ENCODE measurements at regions of chr17 and their contacts with region 1.

Region 1: GRCh38 chr17:75827252-75828115 is 16.7 kb downstream of the UNC13D start:
- DNase-seq: peak; percentile 82
- H3K4me3 ChIP-seq: peak overlapping the region in 2 of 3 experiments; percentile 21 to 30
- H3K27ac ChIP-seq: peak overlapping the region; percentile 22
- H3K4me1 ChIP-seq: peaks cover 7% of the 10 kb centered on the region
- H3K27me3 ChIP-seq: no peaks in the 10 kb centered on the region
- CTCF ChIP-seq: peak; percentile 85 to 91
- POLR2A ChIP-seq: peak; percentile 65

Region 2: GRCh38 chr17:75764711-75765421 is 62.6 kb before region 1 on chr17 and contains the start of gene GALK1:
- CTCF ChIA-PET with region 1: interaction called, 27 read pairs
- POLR2A ChIA-PET with region 1: interaction called, 4 read pairs
- dilution Hi-C with region 1: no loop called
- intact Hi-C with region 1: loop called (anchors 1 kb)
- DNase-seq: peak; percentile 66
- H3K4me3 ChIP-seq: peak within 1 kb of the TSS; percentile 44 to 62 (median 53)
- H3K27ac ChIP-seq: peak within 1 kb of the TSS; percentile 15
- H3K4me1 ChIP-seq: peaks cover 11% of the 10 kb centered on the region
- H3K27me3 ChIP-seq: no peaks in the 10 kb centered on the region
- CTCF ChIP-seq: peak in 1 of 2 donors; percentile 71
- POLR2A ChIP-seq: peak; percentile 34
- total RNA-seq, gene GALK1: 45.8 and 47.0 TPM in 2 replicates

Region 3: DNA sequence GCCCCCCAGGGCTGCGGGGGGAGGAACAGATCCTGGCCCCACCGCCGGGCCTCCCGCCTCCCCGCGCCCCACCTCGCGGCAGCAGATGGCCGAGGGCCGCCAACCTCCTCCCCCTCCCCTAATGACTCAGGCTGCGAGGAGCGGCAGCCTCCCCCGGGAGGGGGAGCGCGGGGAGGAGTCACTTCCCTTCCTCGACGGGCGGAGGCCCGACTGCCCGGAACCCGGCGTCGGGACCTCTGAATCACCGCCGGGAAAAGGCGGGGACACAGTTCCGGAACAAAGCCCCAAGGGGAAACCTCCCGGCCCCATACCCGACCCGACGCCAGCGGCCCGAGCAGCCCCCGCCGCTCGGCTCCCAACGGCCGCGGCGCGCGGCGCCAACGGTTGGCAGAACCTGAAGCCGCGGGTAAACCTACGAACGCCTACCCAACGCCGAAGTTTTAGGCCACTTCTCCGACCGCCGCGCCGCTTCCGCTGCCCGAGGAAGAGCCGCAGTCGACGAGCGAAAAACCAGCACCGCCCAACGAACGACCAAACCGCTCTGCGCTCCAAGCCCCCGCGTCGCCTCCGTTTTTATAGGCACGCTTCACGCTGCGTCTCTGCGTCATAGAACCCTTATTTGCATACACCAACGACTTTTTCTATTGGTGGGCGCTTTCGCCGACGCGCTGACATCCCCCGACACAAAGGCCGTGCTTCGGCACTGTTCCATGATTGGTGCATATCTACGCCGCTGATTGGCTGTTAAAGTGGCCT is 48.1 kb before region 1 on chr17:
- CTCF ChIA-PET with region 1: interaction called, 73 read pairs
- POLR2A ChIA-PET with region 1: interaction called, 11 read pairs
- dilution Hi-C with region 1: no loop called
- intact Hi-C with region 1: loop called (anchors 1 kb)
- DNase-seq: peak; percentile 100
- H3K4me3 ChIP-seq: peak overlapping the region; percentile 61 to 87 (median 72)
- H3K27ac ChIP-seq: peak overlapping the region; percentile 93
- H3K4me1 ChIP-seq: peaks cover 24% of the 10 kb centered on the region
- H3K27me3 ChIP-seq: no peaks in the 10 kb centered on the region
- CTCF ChIP-seq: no peak
- POLR2A ChIP-seq: peak; percentile 100

Region 4: DNA sequence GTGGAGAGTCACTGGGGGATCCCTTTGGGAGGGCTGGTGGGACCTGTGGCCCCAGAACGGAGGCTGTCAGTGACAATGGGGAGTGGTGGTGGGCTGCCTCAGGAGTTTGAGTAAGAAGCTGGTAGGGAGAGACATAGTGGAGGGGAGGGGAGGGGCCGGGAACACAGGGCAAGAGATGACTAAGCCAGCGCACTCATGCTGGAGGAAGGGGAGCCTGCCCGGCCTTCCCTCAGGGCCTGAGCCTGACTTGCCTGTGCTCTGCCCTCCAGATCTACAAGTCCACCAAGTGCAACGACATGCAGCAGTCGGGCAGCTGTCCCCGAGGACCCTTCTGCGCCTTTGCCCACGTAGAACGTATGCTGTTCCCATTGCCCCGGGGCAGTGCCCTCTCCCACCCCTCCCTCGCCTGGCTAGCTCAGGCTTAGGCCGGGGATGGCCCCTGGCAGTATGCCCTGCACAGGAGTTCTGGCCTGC is 12.5 kb before region 1 on chr17:
- CTCF ChIA-PET with region 1: interaction called, 12 read pairs
- POLR2A ChIA-PET with region 1: no interaction called
- dilution Hi-C with region 1: no loop called
- intact Hi-C with region 1: no loop called
- DNase-seq: peak; percentile 59
- H3K4me3 ChIP-seq: no peak overlapping the region
- H3K27ac ChIP-seq: peak overlapping the region; percentile 22
- H3K4me1 ChIP-seq: peaks cover 6% of the 10 kb centered on the region
- H3K27me3 ChIP-seq: no peaks in the 10 kb centered on the region
- CTCF ChIP-seq: no peak
- POLR2A ChIP-seq: no peak

Region 5: DNA sequence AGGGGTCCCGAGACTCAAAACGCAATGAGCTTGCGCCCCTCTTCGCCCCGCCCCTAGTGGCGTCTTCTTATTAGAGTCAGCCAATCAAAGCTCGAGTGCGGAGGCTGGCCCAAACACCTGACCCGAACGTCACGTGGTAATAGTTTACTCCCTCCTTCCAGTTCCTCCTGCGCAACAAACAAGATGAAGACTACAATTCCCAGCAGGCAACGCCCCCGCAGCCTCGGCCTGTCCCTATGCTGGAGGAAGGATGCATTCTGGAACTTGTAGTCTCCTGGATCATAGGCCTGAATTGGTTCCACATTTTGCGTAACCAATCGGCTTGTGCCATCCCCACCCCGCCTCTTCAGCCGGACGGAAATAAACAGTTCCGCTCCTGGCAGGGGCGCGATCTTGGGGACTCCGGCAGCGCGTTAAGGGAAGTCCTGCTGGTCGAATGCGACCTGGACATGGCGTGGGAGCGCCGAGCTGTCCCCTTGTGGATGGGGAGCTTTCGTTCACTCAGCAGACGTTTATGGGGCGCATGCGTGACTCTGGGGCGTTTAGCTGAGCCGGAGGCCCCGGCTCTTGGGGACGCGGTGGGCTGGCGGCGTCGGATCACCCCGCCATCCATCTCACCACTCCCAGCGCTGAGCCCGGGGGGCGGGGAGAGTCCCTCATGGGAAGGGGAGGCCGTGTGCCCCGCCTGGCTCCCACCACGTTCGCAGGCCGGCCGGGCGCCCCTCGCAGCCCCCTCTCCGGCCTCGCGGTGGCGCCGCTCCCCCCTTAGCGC is 28.0 kb after region 1 on chr17 and contains the start of gene WBP2:
- CTCF ChIA-PET with region 1: interaction called, 21 read pairs
- POLR2A ChIA-PET with region 1: no interaction called
- dilution Hi-C with region 1: no loop called
- intact Hi-C with region 1: loop called (anchors 1 kb)
- DNase-seq: peak; percentile 100
- H3K4me3 ChIP-seq: peak within 1 kb of the TSS; percentile 19 to 76 (median 75)
- H3K27ac ChIP-seq: peak within 1 kb of the TSS; percentile 89
- H3K4me1 ChIP-seq: peaks cover 39% of the 10 kb centered on the region
- H3K27me3 ChIP-seq: no peaks in the 10 kb centered on the region
- CTCF ChIP-seq: peak; percentile 42 to 54
- POLR2A ChIP-seq: peak; percentile 81
- total RNA-seq, gene WBP2: 120 and 126 TPM in 2 replicates

Region 6: GRCh38 chr17:75877752-75878173 is 50.3 kb after region 1 on chr17:
- CTCF ChIA-PET with region 1: interaction called, 8 read pairs
- POLR2A ChIA-PET with region 1: no interaction called
- dilution Hi-C with region 1: no loop called
- intact Hi-C with region 1: loop called (anchors 1 kb)
- DNase-seq: peak; percentile 74
- H3K4me3 ChIP-seq: peak overlapping the region; percentile 1 to 67 (median 66)
- H3K27ac ChIP-seq: peak overlapping the region; percentile 70
- H3K4me1 ChIP-seq: peaks cover 34% of the 10 kb centered on the region
- H3K27me3 ChIP-seq: no peaks in the 10 kb centered on the region
- CTCF ChIP-seq: peak; percentile 33 to 66
- POLR2A ChIP-seq: no peak